IMR-90 (cell line): ENCODE measurements at regions of chr15 and their contacts with region 1.

Region 1: DNA sequence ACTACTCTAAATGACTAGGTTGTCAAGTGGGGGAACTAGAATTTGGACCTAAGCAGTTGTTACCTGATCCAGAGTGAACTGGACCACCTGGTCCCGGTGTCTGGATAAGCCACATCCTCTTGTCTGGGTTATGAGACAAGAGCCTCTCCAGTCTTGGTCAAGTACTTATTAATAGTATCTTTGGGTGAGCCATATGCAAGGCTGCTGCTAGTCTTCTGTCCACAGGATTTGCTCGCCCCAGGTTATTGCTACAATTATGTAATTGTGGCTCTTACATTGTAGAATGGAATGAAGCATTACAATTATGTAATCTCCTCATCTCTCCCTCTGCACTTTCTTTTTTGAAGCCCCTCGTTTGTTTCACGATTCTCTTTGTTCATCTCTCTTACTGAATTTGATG is 24.0 kb upstream of the AGBL1 start:
- DNase-seq: no peak
- ATAC-seq: no peak
- H3K4me3 ChIP-seq: no peak overlapping the region
- H3K27ac ChIP-seq: no peak overlapping the region
- H3K4me1 ChIP-seq: no peaks in the 10 kb centered on the region
- H3K27me3 ChIP-seq: no peaks in the 10 kb centered on the region
- CTCF ChIP-seq: no peak
- POLR2A ChIP-seq: no peak
- RAD21 ChIP-seq: no peak

Region 2: DNA sequence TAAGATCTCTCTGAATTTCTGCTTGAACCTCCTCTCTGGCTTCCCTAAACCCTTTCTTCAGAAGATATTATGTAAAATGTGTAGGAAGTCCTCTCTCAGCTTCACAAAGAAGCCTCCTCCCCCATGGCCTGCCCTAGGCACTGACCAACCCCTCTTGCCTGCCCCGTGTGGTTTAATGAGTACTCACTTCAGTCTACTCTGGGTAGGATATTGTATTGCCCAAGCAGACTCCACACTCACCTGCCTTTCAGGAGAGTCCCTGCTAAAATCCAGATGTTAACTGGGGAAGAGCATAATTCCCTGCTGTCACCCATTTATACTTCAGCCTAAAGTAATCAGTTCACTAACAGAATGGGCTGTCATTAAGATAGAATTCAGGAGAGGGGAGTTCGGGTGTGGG is 21.4 kb after region 1 on chr15:
- CTCF ChIA-PET with region 1: interaction called, 3 read pairs
- POLR2A ChIA-PET with region 1: no interaction called
- dilution Hi-C with region 1: no loop called
- in situ Hi-C with region 1: no loop called
- intact Hi-C with region 1: loop called (anchors 1 kb)
- DNase-seq: no peak
- ATAC-seq: no peak
- H3K4me3 ChIP-seq: no peak overlapping the region
- H3K27ac ChIP-seq: no peak overlapping the region
- H3K4me1 ChIP-seq: no peaks in the 10 kb centered on the region
- H3K27me3 ChIP-seq: no peaks in the 10 kb centered on the region
- CTCF ChIP-seq: no peak
- POLR2A ChIP-seq: no peak
- RAD21 ChIP-seq: no peak

Region 3: DNA sequence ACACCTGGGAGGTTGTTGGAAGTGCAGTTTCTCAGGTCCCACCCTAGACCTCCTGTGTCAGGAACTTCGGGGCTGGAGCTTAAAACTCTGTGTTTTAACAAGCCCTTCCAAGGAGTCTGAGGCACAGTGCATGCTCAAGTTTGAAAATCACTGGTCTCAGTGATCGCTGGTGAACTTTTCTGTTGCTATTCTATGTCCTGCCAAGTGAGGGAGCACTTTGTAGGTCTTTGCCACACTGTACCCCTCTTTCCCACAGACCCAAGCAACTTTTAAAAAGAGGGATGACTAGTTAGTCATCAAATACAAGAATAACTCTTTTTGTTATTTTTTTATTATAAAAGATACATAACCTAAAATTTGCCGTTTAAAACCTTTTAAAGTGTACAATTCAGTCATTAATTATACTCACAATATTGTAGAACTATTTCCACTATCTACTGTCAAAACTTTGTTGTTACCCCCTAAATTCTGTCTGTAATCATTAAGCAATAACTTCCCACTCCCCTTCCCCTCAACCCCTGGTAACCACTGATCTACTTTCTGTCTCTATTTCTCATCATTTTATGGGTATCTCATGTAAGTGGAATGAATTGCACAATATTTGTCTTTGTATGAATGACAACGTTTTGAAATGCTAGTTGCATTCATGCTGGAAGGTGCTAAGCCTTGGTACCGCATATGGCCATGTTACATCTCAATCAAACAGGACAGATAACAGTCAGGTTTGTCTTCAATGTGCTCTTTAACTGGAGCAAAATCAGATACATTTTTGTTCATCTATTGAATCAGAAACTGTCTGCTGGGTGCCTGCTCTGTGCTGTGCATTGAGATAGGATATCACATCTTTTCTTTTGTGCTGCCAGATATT is 158.0 kb after region 1 on chr15:
- CTCF ChIA-PET with region 1: no interaction called
- POLR2A ChIA-PET with region 1: no interaction called
- dilution Hi-C with region 1: no loop called
- in situ Hi-C with region 1: no loop called
- intact Hi-C with region 1: no loop called
- DNase-seq: no peak
- ATAC-seq: no peak
- H3K4me3 ChIP-seq: no peak overlapping the region
- H3K27ac ChIP-seq: no peak overlapping the region
- H3K4me1 ChIP-seq: no peaks in the 10 kb centered on the region
- H3K27me3 ChIP-seq: no peaks in the 10 kb centered on the region
- CTCF ChIP-seq: no peak
- POLR2A ChIP-seq: no peak
- RAD21 ChIP-seq: no peak

Region 4: DNA sequence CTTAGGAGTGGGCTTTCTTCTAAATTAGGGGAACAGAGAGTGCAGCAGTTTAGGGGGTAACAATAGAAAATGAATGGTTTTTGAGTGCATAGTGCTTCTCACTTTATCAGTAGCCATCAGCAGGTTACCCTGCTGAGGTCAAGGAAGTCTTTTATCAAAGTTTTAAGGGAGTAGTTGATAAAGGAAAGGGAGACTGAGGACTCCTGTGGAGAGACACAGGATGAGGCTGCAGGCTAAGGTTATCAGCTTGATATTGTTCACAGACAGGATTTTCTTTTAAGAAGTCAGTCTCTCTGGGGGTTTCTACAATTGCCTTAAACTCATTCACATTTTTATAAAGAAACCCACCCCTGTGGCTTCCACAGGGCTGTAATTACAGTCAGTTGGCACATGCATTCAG is 228.9 kb after region 1 on chr15:
- CTCF ChIA-PET with region 1: no interaction called
- POLR2A ChIA-PET with region 1: no interaction called
- dilution Hi-C with region 1: no loop called
- in situ Hi-C with region 1: no loop called
- intact Hi-C with region 1: no loop called
- DNase-seq: no peak
- ATAC-seq: no peak
- H3K4me3 ChIP-seq: no peak overlapping the region
- H3K27ac ChIP-seq: no peak overlapping the region
- H3K4me1 ChIP-seq: no peaks in the 10 kb centered on the region
- H3K27me3 ChIP-seq: no peaks in the 10 kb centered on the region
- CTCF ChIP-seq: no peak
- POLR2A ChIP-seq: no peak
- RAD21 ChIP-seq: no peak